ENCODE measurements at regions of chr17 and their contacts with region 1.

Region 1: DNA sequence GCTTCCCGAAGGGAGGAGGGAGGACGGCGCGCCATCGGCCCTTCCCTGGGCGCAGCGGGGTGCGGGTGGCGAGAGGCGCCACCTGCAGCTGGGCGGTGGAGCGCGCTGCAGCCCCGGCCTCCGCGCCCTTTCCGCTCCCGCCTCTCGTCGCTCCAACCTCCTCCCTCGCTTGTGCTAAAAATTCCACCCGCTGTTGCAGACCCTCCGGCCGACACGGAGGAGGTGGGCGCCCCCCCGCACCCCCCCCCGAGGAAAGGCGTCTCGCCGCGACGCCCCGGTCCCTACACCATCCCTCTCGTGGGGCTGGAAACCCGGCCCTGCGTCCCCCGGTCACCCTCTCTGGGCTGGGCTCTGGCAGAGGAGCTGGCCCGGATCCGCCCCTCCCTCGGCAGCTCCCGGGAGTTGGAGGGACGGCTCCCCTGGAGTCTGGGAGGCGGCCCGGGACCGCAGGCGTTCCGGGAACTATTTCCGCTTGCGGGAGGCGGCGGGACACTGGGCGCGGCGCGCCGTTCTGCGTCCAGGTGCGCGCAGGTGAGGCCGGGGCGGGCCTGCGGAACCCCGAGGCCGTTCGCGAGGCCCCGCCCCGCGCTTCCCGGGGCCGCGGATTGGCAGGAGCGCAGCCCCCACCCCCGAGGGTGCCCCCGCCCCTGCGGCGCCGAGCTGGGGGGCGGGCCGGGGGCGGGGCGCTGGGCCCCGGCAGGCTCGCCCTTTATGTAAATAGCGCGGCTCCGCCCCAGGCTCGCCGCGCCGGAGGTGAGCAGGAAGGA is at the start of gene LLGL2:
- DNase-seq: peak; percentile 68 to 96 (median 84)
- ATAC-seq: peak; percentile 91
- H3K4me3 ChIP-seq: peak within 1 kb of the TSS; percentile 64
- H3K4me3 Mint-ChIP-seq: peak within 1 kb of the TSS; percentile 82
- H3K27ac ChIP-seq: no peak within 1 kb of the TSS
- H3K27ac Mint-ChIP-seq: no peak within 1 kb of the TSS
- H3K4me1 ChIP-seq: peaks cover 28% of the 10 kb centered on the region
- H3K4me1 Mint-ChIP-seq: peaks cover 24% of the 10 kb centered on the region
- H3K27me3 ChIP-seq: no peaks in the 10 kb centered on the region
- H3K27me3 Mint-ChIP-seq: no peaks in the 10 kb centered on the region
- CTCF ChIP-seq: peak; percentile 44
- total RNA-seq, gene LLGL2: 31.2 to 34.2 TPM

Region 2: GRCh38 chr17:74852237-74853047 is 672.7 kb before region 1 on chr17:
- CTCF ChIA-PET with region 1: no interaction called
- POLR2A ChIA-PET with region 1: no interaction called
- intact Hi-C with region 1: no loop called
- DNase-seq: peak; percentile 48 to 87 (median 64)
- ATAC-seq: peak; percentile 95
- H3K4me3 ChIP-seq: peak overlapping the region; percentile 55
- H3K4me3 Mint-ChIP-seq: peak overlapping the region; percentile 82
- H3K27ac ChIP-seq: no peak overlapping the region
- H3K27ac Mint-ChIP-seq: no peak overlapping the region
- H3K4me1 ChIP-seq: peaks cover 8% of the 10 kb centered on the region
- H3K4me1 Mint-ChIP-seq: peaks cover 5% of the 10 kb centered on the region
- H3K27me3 ChIP-seq: peaks cover 30 to 54% of the 10 kb centered on the region in 2 experiments
- H3K27me3 Mint-ChIP-seq: peaks cover 50% of the 10 kb centered on the region
- CTCF ChIP-seq: no peak

Region 3: DNA sequence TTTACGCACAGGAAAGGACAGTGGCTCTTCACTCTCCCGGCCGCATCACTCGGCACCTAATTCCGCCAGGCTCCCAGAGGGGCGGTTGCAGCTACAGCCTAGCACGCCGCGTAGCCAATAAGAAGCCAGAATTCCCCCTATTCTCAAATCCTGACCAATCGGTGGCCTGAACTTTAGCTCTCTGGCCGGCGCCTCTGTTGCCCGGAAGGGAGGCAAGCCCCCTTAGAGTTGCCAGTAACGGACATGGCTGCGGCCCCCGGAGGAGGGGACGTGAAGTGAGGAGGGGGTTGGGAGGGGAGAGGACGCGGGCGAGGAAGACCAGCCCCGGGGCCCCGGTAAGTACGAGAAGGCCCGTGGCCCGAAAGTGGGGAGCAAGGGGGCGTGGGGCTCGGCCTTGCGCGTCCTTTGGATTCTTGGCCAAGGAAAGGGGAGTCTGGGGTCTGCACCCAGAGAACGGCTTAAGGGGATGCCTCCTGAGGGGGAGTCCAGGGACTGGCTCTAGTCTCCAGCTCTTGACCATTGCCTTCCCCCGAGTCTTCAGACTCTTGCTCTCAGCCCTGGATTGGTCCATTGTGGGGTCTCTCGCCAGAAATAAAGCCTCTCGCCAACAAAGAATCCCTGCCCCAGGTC is 68.6 kb before region 1 on chr17 and contains the start of gene TMEM94:
- CTCF ChIA-PET with region 1: no interaction called
- POLR2A ChIA-PET with region 1: interaction called, 13 read pairs
- intact Hi-C with region 1: no loop called
- DNase-seq: peak; percentile 79 to 97 (median 88)
- ATAC-seq: peak; percentile 96
- H3K4me3 ChIP-seq: peak within 1 kb of the TSS; percentile 70
- H3K4me3 Mint-ChIP-seq: peak within 1 kb of the TSS; percentile 100
- H3K27ac ChIP-seq: peak within 1 kb of the TSS; percentile 23 to 59
- H3K27ac Mint-ChIP-seq: peak within 1 kb of the TSS; percentile 91
- H3K4me1 ChIP-seq: peaks cover 17% of the 10 kb centered on the region
- H3K4me1 Mint-ChIP-seq: peaks cover 29% of the 10 kb centered on the region
- H3K27me3 ChIP-seq: no peaks in the 10 kb centered on the region
- H3K27me3 Mint-ChIP-seq: no peaks in the 10 kb centered on the region
- CTCF ChIP-seq: no peak
- total RNA-seq, gene TMEM94: 52.8 to 57.3 TPM

Region 4: GRCh38 chr17:75571197-75571873 is 46.2 kb after region 1 on chr17:
- CTCF ChIA-PET with region 1: no interaction called
- POLR2A ChIA-PET with region 1: no interaction called
- intact Hi-C with region 1: no loop called
- DNase-seq: peak in 3 of 14 experiments; percentile 30 to 76 (median 61)
- ATAC-seq: no peak
- H3K4me3 ChIP-seq: no peak overlapping the region
- H3K4me3 Mint-ChIP-seq: no peak overlapping the region
- H3K27ac ChIP-seq: no peak overlapping the region
- H3K27ac Mint-ChIP-seq: no peak overlapping the region
- H3K4me1 ChIP-seq: peaks cover 6% of the 10 kb centered on the region
- H3K4me1 Mint-ChIP-seq: no peaks in the 10 kb centered on the region
- H3K27me3 ChIP-seq: no peaks in the 10 kb centered on the region
- H3K27me3 Mint-ChIP-seq: no peaks in the 10 kb centered on the region
- CTCF ChIP-seq: no peak

Region 5: DNA sequence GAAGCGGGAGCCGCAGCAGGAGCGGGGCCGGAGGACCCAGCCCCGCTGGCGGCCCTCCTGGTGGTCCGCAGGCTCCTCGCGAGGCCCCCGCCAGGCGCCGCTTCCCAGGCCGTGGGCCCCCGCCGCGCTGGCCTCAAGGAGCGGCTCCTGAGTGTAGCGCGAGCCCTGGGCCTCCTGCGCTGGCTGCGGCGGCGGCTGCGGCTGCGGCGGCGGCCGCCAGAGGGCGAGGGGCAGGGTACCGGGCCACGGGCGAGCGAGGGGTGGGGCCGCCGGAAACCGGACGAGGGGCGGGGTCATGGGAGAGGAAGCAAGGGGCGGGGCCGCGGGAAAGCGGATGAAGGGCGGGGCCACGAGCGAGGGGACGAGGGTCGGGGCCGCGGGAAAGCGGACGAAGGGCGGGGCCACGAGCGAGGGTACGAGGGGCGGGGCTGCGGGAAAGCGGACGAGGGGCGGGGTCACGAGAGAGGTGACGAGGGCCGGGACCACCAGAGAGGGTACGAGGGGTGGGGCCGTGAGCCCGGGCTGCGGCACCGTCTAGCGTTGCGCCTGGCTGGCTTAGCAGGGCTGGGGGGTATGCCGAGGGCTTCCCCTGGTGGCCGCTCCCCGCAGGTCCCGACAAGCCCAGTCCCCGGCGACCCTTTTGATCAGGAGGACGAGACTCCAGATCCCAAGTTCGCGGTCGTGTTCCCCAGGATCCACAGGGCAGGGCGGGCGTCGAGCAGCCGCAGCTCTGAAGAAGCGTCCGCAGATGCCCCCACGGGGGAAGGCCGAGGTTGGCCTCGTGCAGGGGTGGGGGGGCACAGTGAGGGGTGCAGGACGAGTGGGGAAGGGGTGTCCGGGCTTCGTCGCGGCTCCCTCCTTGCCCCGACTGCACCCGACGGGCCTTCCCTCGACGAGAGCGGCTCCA is 64.1 kb after region 1 on chr17:
- CTCF ChIA-PET with region 1: interaction called, 4 read pairs
- POLR2A ChIA-PET with region 1: interaction called, 5 read pairs
- intact Hi-C with region 1: loop called (anchors 2 to 5 kb)
- DNase-seq: peak; percentile 91 to 99 (median 96)
- ATAC-seq: peak; percentile 88
- H3K4me3 ChIP-seq: peak overlapping the region; percentile 66
- H3K4me3 Mint-ChIP-seq: peak overlapping the region; percentile 81
- H3K27ac ChIP-seq: peak overlapping the region in 1 of 2 donors; percentile 56
- H3K27ac Mint-ChIP-seq: no peak overlapping the region
- H3K4me1 ChIP-seq: peaks cover 32% of the 10 kb centered on the region
- H3K4me1 Mint-ChIP-seq: peaks cover 11% of the 10 kb centered on the region
- H3K27me3 ChIP-seq: no peaks in the 10 kb centered on the region
- H3K27me3 Mint-ChIP-seq: no peaks in the 10 kb centered on the region
- CTCF ChIP-seq: peak; percentile 57

Region 6: DNA sequence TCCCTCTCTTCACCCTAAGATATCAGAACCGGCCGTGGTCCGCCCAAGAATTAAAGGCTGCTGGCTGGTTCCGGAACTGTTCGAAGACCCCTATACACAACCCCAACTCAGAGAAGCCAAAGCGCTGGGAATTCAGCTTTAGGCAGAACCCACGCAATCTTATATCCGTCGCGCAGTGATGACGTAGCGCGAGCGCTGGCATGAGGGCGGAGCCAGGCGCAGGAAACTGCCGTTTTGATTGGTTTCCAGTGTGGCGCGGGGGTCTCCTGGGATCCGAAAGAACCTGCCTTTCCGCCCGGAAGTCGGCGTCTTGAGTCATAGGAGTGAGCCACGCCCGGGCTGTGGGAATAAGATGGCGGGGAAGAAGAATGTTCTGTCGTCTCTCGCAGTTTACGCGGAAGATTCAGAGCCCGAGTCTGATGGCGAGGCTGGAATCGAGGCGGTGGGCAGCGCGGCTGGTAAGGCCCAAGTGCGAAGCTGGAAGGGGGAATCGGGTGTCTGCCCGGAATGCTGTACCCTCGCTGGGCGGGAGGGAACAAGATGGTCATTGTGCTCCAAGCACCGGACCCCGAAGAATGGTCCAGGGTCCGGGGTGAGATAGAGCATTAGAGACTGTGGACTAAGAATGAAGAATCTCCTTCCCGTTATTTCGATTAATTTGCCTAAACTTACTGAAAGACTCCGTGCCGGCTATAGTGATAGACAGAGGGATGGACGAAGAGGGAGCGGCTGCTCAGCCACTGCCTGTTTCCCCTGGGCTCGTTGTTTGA is 142.1 kb after region 1 on chr17 and contains the starts of genes RECQL5 and SAP30BP:
- CTCF ChIA-PET with region 1: no interaction called
- POLR2A ChIA-PET with region 1: no interaction called
- intact Hi-C with region 1: loop called in 1 of 2 experiments (anchors 5 kb)
- DNase-seq: peak; percentile 97 to 99 (median 98)
- ATAC-seq: peak; percentile 100
- H3K4me3 ChIP-seq: peak within 1 kb of the TSS; percentile 76
- H3K4me3 Mint-ChIP-seq: peak within 1 kb of the TSS; percentile 72
- H3K27ac ChIP-seq: peak within 1 kb of the TSS; percentile 87 to 90
- H3K27ac Mint-ChIP-seq: peak within 1 kb of the TSS; percentile 57
- H3K4me1 ChIP-seq: peaks cover 23% of the 10 kb centered on the region
- H3K4me1 Mint-ChIP-seq: peaks cover 26% of the 10 kb centered on the region
- H3K27me3 ChIP-seq: no peaks in the 10 kb centered on the region
- H3K27me3 Mint-ChIP-seq: no peaks in the 10 kb centered on the region
- CTCF ChIP-seq: no peak
- total RNA-seq, gene RECQL5: 16.4 to 17.7 TPM
- total RNA-seq, gene SAP30BP: 209 to 227 TPM